Activated CD8-positive, alpha-beta T cell treated with anti-CD3 and anti-CD28 coated beads for 36 hours (primary cell): ENCODE measurements at regions of chr3 and their contacts with region 1.

Region 1: DNA sequence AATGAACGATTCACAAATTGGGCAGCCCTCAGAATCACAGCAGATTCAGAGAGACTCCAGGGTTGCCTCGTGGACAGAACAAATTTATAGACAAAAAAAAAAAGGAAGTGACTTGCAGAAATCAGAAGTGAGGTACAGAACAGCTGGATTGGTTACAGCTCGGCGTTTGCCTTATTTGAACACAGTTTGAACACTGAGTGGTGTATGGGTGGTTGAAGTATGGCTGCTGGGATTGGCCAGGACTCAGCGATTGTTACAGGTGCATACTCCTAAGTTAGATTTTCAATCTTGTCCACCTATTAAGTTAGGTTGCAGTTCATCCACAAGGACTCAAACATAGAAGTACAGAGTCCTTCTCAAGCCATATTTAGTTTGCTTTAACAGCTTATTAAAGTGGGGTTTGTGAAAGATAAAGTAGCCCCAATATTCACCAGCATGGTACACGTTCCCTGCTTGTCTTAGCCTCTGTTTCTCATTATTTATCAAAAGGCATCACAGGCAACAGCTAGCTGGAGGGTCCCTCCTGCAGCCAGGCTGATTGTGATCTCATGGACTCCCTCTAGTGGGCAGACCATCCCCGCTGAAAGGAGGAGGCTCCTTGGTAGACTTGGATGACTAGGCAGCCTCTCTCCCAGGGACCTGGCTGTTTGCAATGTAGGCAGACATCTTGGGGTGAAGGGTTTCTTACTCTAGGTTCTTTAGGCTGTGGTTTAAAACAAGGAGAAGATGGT is 17.6 kb upstream of the ALDH1L1 start:
- DNase-seq: peak; percentile 77
- ATAC-seq: peak; percentile 88
- H3K4me3 Mint-ChIP-seq: no peak overlapping the region
- H3K27ac Mint-ChIP-seq: no peak overlapping the region
- H3K4me1 Mint-ChIP-seq: no peaks in the 10 kb centered on the region
- H3K27me3 Mint-ChIP-seq: peaks cover 5% of the 10 kb centered on the region
- CTCF ChIP-seq: peak; percentile 35

Region 2: DNA sequence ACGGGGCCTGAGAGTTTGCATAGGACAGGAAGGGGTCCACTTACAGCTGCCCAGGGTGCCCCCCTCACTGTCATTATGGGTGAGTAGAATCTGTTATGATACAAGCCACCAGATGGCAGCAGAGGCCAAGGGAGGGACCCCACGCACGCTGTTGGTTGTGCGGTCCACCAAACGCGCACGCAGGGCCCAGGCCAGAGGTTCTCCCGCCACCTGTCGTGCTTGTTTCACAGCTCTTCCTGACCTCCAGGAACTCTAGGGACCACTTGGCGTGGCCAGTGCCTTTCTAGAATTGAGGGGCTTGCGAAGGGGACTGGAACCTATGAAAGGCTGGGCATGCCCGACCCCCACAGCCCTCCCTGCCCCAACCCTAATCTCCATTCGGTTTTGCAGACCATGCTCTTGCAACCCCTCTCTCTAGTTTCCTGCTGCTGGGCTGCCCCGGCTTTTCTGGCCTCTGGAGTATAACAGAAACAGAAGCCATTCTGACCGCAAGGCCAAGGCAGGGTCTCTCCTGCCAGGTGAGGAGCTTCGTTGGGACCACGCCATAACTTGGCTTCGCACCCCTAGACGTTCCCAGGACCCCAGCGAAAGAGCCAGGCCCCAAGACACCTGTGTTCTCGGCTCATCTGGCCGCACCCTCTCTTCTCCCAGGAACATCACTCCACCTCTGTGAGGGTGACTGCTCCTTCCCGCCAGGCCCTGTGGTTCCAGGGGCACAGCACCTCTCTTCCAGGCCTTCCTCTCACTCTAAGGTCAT is 63.6 kb before region 1 on chr3:
- CTCF ChIA-PET with region 1: interaction called, 28 read pairs
- POLR2A ChIA-PET with region 1: no interaction called
- intact Hi-C with region 1: no loop called
- DNase-seq: peak; percentile 72
- ATAC-seq: peak; percentile 80
- H3K4me3 Mint-ChIP-seq: no peak overlapping the region
- H3K27ac Mint-ChIP-seq: no peak overlapping the region
- H3K4me1 Mint-ChIP-seq: no peaks in the 10 kb centered on the region
- H3K27me3 Mint-ChIP-seq: peaks cover 17% of the 10 kb centered on the region
- CTCF ChIP-seq: peak; percentile 72

Region 3: GRCh38 chr3:126186271-126186670 is 11.7 kb before region 1 on chr3:
- CTCF ChIA-PET with region 1: interaction called, 20 read pairs
- POLR2A ChIA-PET with region 1: no interaction called
- intact Hi-C with region 1: no loop called
- DNase-seq: no peak
- ATAC-seq: no peak
- H3K4me3 Mint-ChIP-seq: no peak overlapping the region
- H3K27ac Mint-ChIP-seq: no peak overlapping the region
- H3K4me1 Mint-ChIP-seq: no peaks in the 10 kb centered on the region
- H3K27me3 Mint-ChIP-seq: peaks cover 21% of the 10 kb centered on the region
- CTCF ChIP-seq: no peak

Region 4: DNA sequence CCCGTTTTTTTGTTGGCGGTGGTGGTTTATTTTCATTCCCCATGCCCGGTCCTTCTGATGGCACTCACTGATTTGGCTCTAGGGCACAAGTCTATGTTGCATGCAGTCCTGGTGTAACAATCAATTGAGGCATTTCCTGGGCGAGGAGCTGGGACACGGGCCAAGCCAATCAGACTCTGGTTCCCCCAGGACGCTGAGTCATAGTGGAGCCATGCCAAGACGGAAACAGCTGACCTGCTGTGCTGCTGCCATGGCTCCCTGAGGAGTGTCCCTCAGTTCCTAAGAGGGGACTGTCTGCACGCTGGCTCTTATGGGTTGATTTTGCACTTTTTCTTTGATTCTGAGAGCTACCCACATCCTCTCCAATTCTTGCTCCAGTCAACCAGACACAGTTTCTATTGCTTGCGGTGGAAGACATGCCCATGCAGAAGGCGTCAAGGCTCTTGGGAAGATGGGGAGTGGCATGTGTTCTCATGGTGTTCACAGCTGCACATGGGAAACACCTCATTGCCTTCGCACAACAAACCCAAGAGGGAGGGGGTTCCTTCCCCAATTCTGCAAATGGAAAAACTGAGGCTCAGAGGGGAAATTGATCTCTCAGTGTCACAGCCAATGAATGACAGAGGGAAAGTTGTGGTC is 10.7 kb after region 1 on chr3:
- CTCF ChIA-PET with region 1: interaction called, 11 read pairs
- POLR2A ChIA-PET with region 1: no interaction called
- intact Hi-C with region 1: no loop called
- DNase-seq: no peak
- ATAC-seq: no peak
- H3K4me3 Mint-ChIP-seq: no peak overlapping the region
- H3K27ac Mint-ChIP-seq: no peak overlapping the region
- H3K4me1 Mint-ChIP-seq: peaks cover 1% of the 10 kb centered on the region
- H3K27me3 Mint-ChIP-seq: peaks cover 43% of the 10 kb centered on the region
- CTCF ChIP-seq: no peak

Region 5: GRCh38 chr3:126263539-126263938 is 65.5 kb after region 1 on chr3:
- CTCF ChIA-PET with region 1: no interaction called
- POLR2A ChIA-PET with region 1: no interaction called
- intact Hi-C with region 1: no loop called
- DNase-seq: no peak
- ATAC-seq: no peak
- H3K4me3 Mint-ChIP-seq: no peak overlapping the region
- H3K27ac Mint-ChIP-seq: no peak overlapping the region
- H3K4me1 Mint-ChIP-seq: peaks cover 2% of the 10 kb centered on the region
- H3K27me3 Mint-ChIP-seq: peaks cover 29% of the 10 kb centered on the region
- CTCF ChIP-seq: no peak